ENCODE measurements at regions of chr12 and their contacts with region 1.

Region 1: DNA sequence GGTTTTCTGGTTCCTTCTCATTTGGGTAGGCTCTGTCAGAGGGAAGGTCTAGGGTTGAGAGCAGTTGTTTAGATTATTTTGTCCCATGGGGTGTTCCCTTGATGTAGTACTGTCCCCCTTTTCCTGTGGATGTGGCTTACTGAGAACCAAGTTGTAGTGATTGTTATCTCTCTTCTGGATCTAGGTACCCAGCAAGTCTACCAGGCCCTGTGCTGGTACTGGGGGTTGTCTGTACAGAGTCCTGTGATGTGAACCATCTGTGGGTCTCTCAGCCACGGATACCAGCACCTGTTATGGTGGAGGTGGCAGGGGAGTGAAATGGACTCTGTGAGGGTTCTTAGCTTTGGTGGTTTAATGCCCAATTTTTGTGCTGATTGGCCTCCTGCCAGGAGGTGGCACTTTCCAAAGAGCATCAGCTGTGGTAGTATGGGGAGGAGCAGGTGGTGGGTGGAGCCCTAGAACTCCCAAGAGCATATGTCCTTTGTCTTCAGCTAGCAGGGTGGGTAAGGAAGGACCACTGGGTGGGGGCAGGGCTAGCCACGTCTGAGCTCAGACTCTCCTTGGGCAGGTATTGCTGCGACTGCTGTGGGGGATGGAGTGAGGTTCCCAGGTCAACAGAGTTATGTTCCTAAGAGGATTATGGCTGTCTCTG is 179.3 kb upstream of the BTG1 start:
- DNase-seq: no peak
- H3K4me3 ChIP-seq: no peak overlapping the region
- H3K27ac ChIP-seq: no peak overlapping the region
- H3K4me1 ChIP-seq: no peaks in the 10 kb centered on the region
- H3K27me3 ChIP-seq: no peaks in the 10 kb centered on the region
- CTCF ChIP-seq: no peak
- EP300 ChIP-seq: no peak
- POLR2A ChIP-seq: no peak

Region 2: GRCh38 chr12:92108651-92109050 is 216.3 kb before region 1 on chr12:
- intact Hi-C with region 1: no loop called
- DNase-seq: peak in 3 of 5 donors; percentile 12 to 69 (median 39)
- H3K4me3 ChIP-seq: no peak overlapping the region
- H3K27ac ChIP-seq: no peak overlapping the region
- H3K4me1 ChIP-seq: peaks cover 4% of the 10 kb centered on the region
- H3K27me3 ChIP-seq: no peaks in the 10 kb centered on the region
- CTCF ChIP-seq: no peak
- EP300 ChIP-seq: no peak
- POLR2A ChIP-seq: no peak

Region 3: GRCh38 chr12:92272061-92272964 is 52.7 kb before region 1 on chr12:
- intact Hi-C with region 1: loop called in 1 of 4 experiments (anchors 2 kb)
- DNase-seq: no peak
- H3K4me3 ChIP-seq: no peak overlapping the region
- H3K27ac ChIP-seq: no peak overlapping the region
- H3K4me1 ChIP-seq: no peaks in the 10 kb centered on the region
- H3K27me3 ChIP-seq: no peaks in the 10 kb centered on the region
- CTCF ChIP-seq: no peak
- EP300 ChIP-seq: no peak
- POLR2A ChIP-seq: no peak

Region 4: GRCh38 chr12:92289629-92290349 is 35.2 kb before region 1 on chr12:
- intact Hi-C with region 1: no loop called
- DNase-seq: no peak
- H3K4me3 ChIP-seq: no peak overlapping the region
- H3K27ac ChIP-seq: no peak overlapping the region
- H3K4me1 ChIP-seq: peaks cover 1% of the 10 kb centered on the region
- H3K27me3 ChIP-seq: no peaks in the 10 kb centered on the region
- CTCF ChIP-seq: no peak
- EP300 ChIP-seq: no peak
- POLR2A ChIP-seq: no peak

Region 5: DNA sequence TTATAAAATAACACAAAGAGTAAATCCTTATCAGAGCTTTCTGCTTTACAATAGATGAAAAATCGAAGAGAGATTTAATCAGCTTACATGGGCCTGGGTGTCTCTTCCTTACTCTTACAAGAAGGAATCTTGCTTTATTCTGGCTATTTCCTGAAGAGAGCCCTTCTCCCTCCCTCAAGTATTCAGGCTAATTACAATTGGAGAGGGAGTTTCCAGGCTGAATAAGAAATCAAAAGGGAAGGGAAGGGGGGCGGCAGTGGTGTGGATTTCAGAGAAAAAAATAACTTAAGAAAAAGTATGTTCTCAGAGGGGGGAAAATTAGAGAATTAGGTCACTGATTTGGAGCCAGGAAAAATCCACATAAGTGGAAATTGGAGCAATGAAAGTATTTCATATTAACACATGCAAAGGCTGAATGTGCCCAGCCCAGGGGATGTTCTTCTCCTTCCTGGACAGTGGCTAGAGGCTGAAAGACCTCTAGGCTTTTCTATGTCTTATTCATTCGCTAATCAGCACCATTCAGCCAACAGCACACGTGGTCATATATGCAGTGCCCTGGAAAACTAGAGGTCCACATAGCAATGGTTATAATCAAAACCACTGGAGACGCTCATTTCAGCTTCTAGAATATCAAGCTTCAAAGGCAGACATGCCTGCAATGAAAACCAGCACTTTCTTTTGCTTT is 20.5 kb before region 1 on chr12:
- intact Hi-C with region 1: loop called in 1 of 4 experiments (anchors 2 kb)
- DNase-seq: no peak
- H3K4me3 ChIP-seq: no peak overlapping the region
- H3K27ac ChIP-seq: no peak overlapping the region
- H3K4me1 ChIP-seq: no peaks in the 10 kb centered on the region
- H3K27me3 ChIP-seq: no peaks in the 10 kb centered on the region
- CTCF ChIP-seq: no peak
- EP300 ChIP-seq: no peak
- POLR2A ChIP-seq: no peak

Region 6: DNA sequence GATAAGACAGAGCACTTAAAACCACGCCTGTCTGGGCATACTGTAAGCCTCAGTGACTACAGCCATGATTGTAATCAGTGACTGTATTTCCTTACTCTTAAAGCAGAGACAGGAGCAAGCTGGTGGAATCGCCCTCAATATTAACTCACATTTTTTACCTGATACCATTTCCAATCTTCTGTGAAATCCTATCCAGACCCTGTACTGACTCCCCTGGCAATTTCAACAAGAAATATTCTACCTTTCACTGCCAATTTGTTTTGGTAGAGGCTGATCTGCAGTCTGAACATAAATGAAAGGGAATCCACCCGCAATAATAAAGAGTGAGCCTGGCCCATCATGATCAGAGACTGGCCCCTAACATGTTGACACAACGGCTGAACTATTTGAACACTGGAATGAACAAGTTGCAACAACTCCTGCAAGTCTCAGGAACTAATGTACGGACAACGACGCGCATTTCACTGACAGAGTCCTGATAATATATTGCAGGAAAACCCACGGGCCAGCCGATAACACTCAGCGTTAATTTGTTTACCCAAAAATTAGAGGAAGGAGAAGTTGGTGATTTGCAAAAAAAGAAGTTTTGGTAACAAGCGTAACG is 16.2 kb after region 1 on chr12:
- intact Hi-C with region 1: no loop called
- DNase-seq: no peak
- H3K4me3 ChIP-seq: no peak overlapping the region
- H3K27ac ChIP-seq: no peak overlapping the region
- H3K4me1 ChIP-seq: no peaks in the 10 kb centered on the region
- H3K27me3 ChIP-seq: no peaks in the 10 kb centered on the region
- CTCF ChIP-seq: no peak
- EP300 ChIP-seq: no peak
- POLR2A ChIP-seq: no peak

Region 7: DNA sequence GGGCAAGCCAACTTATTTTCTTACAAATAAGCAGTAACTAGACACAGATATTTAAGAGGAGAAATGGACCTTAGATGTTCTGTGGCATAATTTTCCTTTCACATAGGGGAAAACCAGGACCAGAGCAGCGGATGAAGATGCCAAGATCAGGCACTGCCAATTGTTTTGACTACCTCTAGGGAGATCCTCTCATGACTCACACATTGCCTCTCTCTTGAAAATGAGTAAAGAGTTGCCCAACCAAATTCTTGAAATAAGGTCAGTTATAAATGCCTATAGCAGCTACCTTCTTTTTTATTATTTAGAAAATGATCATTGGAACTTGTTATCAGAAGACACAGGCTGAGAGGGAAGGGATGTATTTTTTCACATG is 114.4 kb after region 1 on chr12:
- intact Hi-C with region 1: no loop called
- DNase-seq: peak in 1 of 5 donors; percentile 32
- H3K4me3 ChIP-seq: no peak overlapping the region
- H3K27ac ChIP-seq: no peak overlapping the region
- H3K4me1 ChIP-seq: peaks cover 4% of the 10 kb centered on the region
- H3K27me3 ChIP-seq: no peaks in the 10 kb centered on the region
- CTCF ChIP-seq: no peak
- EP300 ChIP-seq: no peak
- POLR2A ChIP-seq: no peak

Measured in ovary (tissue), 10 donors.